Posterior cingulate gyrus (tissue), 11 donors: ENCODE measurements at regions of chr3 and their contacts with region 1.

Region 1: DNA sequence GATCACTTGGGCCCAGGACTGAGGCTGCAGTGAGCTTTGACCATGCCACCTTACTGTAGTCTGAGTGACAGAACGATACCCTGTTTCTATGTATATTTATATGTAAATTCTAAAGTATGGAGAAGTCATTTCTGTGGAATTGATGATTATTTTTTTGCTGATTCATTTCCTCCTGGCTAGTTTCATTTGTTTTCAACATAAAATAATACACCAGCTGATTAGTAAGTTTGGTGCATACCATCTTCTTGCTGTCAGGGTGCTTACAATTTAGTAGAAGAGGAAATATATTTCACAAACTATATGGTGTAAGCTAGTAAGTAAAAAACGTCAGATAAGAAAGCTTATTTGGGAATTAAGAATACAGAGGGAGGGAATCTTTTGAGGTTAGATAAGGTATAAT is 36.0 kb downstream of the SLC25A26 start:
- DNase-seq: no peak

Region 2: GRCh38 chr3:66236281-66236680 is 20.5 kb before region 1 on chr3:
- intact Hi-C with region 1: no loop called
- DNase-seq: no peak

Region 3: GRCh38 chr3:66338927-66339326 is 82.1 kb after region 1 on chr3:
- intact Hi-C with region 1: no loop called
- DNase-seq: no peak

Region 4: GRCh38 chr3:66822186-66823008 is 565.6 kb after region 1 on chr3:
- intact Hi-C with region 1: loop called (anchors 5 kb)
- DNase-seq: peak in 6 of 10 donors; percentile 12 to 81 (median 50)